ENCODE measurements at regions of chr11 and their contacts with region 1.

Region 1: GRCh38 chr11:8964324-8965320 is at the start of gene TMEM9B:
- DNase-seq: peak; percentile 83
- H3K4me3 ChIP-seq: peak within 1 kb of the TSS; percentile 71 to 91 (median 81)
- H3K27ac ChIP-seq: peak within 1 kb of the TSS; percentile 88
- H3K4me1 ChIP-seq: peaks cover 15% of the 10 kb centered on the region
- H3K27me3 ChIP-seq: no peaks in the 10 kb centered on the region
- CTCF ChIP-seq: no peak
- POLR2A ChIP-seq: peak; percentile 96
- total RNA-seq, gene TMEM9B: 27.1 and 30.2 TPM in 2 replicates

Region 2: GRCh38 chr11:8566613-8567210 is 397.9 kb before region 1 on chr11:
- CTCF ChIA-PET with region 1: interaction called, 20 read pairs
- POLR2A ChIA-PET with region 1: no interaction called
- dilution Hi-C with region 1: no loop called
- intact Hi-C with region 1: loop called (anchors 2 kb)
- DNase-seq: peak; percentile 50
- H3K4me3 ChIP-seq: no peak overlapping the region
- H3K27ac ChIP-seq: no peak overlapping the region
- H3K4me1 ChIP-seq: peaks cover 3% of the 10 kb centered on the region
- H3K27me3 ChIP-seq: peaks cover 6 to 7% of the 10 kb centered on the region in 2 experiments
- CTCF ChIP-seq: peak; percentile 19 to 28
- POLR2A ChIP-seq: no peak

Region 3: DNA sequence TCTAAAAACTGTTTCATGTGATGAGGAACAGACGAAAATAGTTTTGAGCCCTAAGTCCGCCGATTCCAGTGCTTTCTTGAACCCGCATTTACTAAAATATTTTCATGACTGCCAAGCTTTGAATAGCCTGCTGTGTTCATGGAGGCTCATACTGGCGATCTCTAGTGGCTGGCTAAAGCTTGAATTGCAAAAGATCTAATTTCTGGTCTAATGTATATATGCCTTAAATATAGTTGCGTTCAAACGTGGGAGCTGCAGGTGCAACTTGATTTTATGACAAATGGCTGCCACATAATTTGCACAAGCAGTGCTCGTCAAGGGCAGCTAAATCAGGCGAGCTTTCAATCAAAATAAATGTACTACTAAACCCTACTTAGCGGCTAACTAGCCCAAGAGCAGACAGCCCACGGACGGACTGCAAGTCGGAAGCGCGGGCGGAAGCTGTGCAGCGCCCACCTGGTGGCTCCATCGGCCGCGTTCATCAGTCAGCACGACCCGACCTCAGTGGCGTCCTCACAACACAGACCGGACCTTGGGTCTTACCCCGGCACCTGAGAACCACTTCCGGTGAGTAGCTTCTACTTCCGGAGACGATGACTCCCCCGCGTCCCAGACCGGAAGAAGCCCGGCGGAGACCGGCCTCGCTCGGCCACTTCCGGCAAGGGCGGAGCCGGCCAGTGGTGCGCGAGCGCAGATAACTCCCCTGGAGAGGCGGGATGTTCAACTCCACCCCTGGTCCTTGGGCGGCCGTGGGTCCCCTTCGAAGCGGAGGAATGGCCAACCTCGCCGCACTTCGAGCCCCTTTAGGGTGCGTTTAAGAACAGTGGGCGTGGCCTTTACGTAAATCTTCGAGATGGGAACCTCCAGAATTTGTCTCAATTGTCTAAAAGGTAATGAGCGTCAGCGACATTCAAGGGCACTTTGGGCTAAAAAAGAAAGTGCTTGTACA is 275.9 kb before region 1 on chr11:
- CTCF ChIA-PET with region 1: interaction called, 14 read pairs
- POLR2A ChIA-PET with region 1: no interaction called
- dilution Hi-C with region 1: no loop called
- intact Hi-C with region 1: loop called (anchors 2 kb)
- DNase-seq: peak; percentile 93
- H3K4me3 ChIP-seq: peak overlapping the region; percentile 45 to 86 (median 53)
- H3K27ac ChIP-seq: peak overlapping the region; percentile 65
- H3K4me1 ChIP-seq: peaks cover 46% of the 10 kb centered on the region
- H3K27me3 ChIP-seq: no peaks in the 10 kb centered on the region
- CTCF ChIP-seq: no peak
- POLR2A ChIP-seq: peak; percentile 99

Region 4: DNA sequence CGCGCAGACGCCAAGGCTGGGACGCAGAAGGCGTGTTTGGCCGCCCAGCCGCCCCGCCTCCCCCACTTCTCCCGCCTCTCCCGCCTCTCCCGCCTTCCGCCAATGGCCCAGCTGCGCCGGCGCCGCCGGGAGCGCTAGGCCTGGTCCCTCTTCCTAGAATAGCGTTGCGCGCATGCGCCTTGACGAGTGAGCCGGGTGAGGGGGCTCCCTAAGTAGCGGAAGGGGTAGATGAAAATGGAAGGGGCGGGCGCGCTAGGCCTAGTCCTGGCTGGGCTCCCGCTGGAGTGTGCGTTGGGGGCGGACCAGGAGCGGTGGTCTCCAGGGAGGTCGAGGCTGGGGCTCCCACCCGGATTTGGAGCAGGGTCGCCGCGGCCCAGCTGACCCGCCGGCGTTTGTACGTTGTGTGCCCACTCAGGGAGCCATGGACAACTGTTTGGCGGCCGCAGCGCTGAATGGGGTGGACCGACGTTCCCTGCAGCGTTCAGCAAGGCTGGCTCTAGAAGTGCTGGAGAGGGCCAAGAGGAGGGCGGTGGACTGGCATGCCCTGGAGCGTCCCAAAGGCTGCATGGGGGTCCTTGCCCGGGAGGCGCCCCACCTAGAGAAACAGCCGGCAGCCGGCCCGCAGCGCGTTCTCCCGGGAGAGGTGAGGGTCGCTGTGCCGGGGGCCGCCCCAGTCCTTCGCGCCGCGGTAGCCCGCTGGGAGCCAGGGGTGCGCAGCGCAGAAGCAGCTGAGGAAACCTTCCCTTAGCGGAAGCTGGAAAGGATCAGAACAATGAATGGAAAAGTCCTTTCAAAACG is 53.4 kb before region 1 on chr11 and contains the start of gene AKIP1:
- CTCF ChIA-PET with region 1: interaction called, 140 read pairs
- POLR2A ChIA-PET with region 1: no interaction called
- dilution Hi-C with region 1: no loop called
- intact Hi-C with region 1: loop called (anchors 1 kb)
- DNase-seq: peak; percentile 98
- H3K4me3 ChIP-seq: peak within 1 kb of the TSS; percentile 63 to 95 (median 82)
- H3K27ac ChIP-seq: peak within 1 kb of the TSS; percentile 63
- H3K4me1 ChIP-seq: peaks cover 32% of the 10 kb centered on the region
- H3K27me3 ChIP-seq: no peaks in the 10 kb centered on the region
- CTCF ChIP-seq: no peak
- POLR2A ChIP-seq: peak; percentile 42
- total RNA-seq, gene AKIP1: 21.9 and 23.4 TPM in 2 replicates

Region 5: DNA sequence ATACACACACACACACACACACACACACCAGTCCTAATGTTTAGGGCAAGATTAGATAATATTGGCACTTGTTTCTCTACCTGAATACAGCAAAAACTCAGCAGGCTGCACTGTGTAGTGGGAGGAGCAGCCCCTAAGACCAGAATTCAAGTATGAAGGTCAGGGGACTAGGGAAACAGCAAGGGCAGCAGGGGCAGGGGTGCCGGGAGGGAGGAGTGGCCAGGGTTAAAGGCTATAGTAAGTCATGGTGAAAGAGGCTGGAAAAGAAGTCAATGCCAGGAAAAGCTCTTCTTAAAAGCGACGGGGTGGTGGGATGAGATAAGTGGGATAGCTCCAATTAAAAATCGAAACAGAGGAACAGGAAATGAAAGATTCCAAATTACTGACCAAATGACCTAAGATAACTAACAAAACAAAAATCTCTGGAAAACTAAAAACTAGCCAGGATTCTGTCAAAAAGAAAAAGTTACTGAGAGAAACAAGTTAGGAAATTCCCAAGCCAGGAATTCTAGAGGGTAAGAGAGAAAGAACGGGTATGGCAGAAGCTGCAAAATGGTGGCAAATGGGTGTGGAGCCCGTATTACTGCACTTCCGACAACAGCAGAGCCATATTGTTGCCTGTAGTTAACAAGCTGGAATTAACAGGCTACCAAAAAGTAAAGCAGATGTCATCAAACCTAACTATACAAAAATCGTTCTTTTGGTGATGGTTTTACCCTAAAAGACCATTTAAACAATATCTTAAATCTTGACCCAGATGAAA is 23.1 kb before region 1 on chr11:
- CTCF ChIA-PET with region 1: interaction called, 15 read pairs
- POLR2A ChIA-PET with region 1: no interaction called
- dilution Hi-C with region 1: no loop called
- intact Hi-C with region 1: no loop called
- DNase-seq: peak; percentile 22
- H3K4me3 ChIP-seq: no peak overlapping the region
- H3K27ac ChIP-seq: no peak overlapping the region
- H3K4me1 ChIP-seq: no peaks in the 10 kb centered on the region
- H3K27me3 ChIP-seq: peaks cover 0 to 4% of the 10 kb centered on the region in 2 experiments
- CTCF ChIP-seq: no peak
- POLR2A ChIP-seq: no peak

Region 6: DNA sequence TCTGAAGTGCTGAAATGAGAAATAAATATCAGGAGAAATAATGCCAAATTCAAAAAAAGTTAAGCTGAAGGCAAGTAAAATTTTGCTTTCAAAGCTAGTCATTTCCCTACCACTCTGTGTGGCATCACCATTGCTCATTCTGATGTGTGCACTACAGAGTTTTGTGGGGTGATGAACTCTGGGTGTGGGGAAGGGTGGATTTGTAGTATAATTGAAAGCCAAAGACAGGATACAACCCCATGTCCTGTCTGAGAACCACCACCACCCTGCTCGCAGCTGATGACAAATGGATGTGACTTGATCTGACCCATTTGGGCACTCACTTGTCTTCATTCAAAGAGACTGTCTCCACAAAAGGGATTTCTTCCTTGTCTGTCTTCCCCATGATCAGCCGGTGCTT is 18.9 kb after region 1 on chr11:
- CTCF ChIA-PET with region 1: no interaction called
- POLR2A ChIA-PET with region 1: no interaction called
- dilution Hi-C with region 1: no loop called
- intact Hi-C with region 1: no loop called
- DNase-seq: no peak
- H3K4me3 ChIP-seq: no peak overlapping the region
- H3K27ac ChIP-seq: no peak overlapping the region
- H3K4me1 ChIP-seq: no peaks in the 10 kb centered on the region
- H3K27me3 ChIP-seq: no peaks in the 10 kb centered on the region
- CTCF ChIP-seq: no peak
- POLR2A ChIP-seq: no peak